Posterior vena cava (tissue), 2 donors: ENCODE measurements at regions of chr17 and their contacts with region 1.

Region 1: DNA sequence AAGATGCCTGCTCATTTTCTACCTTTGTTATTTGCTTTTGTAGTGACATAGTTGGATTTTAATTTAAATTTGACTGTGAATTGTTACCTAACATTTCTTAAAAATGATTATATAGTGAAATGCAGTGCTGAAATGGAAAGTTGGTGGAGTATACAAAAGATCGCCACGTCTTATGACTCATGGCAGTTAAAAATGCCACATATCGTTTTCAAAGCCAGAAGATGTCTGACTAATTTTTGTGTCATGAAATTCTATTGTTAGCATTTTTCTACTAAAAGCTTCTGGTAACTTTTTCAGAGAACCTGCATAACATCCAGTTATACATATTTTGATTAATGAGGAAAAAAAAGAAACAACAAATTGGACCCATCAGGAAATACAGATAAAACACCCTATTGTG is 20.6 kb downstream of the MAP2K4 start:
- DNase-seq: no peak

Region 2: DNA sequence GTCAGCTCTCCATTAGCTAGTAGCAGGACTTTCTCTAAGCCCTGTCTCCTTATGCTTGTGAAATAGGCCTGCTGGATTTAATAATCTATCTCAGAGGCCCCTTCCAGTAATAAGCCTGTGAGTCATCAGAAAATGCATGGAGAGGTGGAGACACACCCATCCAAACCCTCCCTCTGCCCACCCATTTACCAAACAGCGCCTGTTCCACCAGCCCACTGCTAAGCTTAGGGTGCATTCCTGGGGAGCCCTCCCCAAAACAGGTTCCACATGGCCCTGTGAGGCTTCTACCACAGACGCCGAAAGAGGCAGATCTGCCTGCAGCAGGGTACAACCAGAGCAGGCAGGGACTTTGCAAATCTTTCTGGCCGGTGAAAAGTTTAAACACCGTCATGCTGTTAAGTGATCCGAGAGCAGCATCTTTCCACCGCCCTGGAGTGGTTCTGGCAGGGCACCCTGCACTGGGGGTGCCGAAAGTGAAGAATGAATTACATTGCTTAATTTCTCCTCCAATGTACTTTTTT is 1942.2 kb before region 1 on chr17:
- intact Hi-C with region 1: loop called in 1 of 2 experiments (anchors 5 kb)
- DNase-seq: peak; percentile 85

Region 3: GRCh38 chr17:11757815-11758214 is 283.5 kb before region 1 on chr17:
- intact Hi-C with region 1: no loop called
- DNase-seq: no peak

Region 4: GRCh38 chr17:11871773-11872172 is 169.5 kb before region 1 on chr17:
- intact Hi-C with region 1: no loop called
- DNase-seq: no peak

Region 5: DNA sequence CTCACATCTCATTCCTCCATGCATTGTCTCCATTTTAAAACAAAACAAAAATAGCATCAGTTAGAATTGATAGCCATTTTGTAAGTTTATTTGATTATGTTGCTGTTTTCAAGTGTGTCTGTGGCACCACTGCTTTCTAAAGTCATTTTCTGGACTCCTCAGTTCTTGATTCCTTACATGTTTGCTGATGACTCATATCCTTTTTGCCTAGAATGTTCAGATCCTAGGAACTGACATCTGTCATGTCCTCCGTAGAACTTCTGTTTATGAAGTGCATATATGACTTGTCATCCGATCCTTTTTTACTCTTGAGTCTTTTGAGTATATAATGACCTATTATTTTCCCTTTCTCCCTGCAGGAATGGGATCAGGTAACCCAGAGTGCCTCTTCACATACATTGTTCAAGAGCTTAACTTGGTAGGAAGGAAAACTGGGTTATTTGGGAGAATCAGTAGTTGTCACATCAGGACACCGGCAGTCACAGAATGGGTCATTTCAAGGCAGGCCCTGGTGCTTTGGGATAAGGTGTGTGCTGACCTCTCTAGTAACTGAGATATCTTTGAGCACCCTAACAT is 48.6 kb after region 1 on chr17:
- intact Hi-C with region 1: loop called in 1 of 2 experiments (anchors 10 kb)
- DNase-seq: no peak